ENCODE measurements at regions of chr9 and their contacts with region 1.

Region 1: GRCh38 chr9:112333639-112334431 is 416 bp upstream of the PTBP3 start:
- DNase-seq: peak; percentile 85
- ATAC-seq: peak; percentile 87
- H3K4me3 Mint-ChIP-seq: peak overlapping the region; percentile 94
- H3K27ac Mint-ChIP-seq: peak overlapping the region; percentile 96
- H3K4me1 Mint-ChIP-seq: peaks cover 40% of the 10 kb centered on the region
- H3K27me3 Mint-ChIP-seq: no peaks in the 10 kb centered on the region
- CTCF ChIP-seq: no peak

Region 2: GRCh38 chr9:111483862-111484571 is 849.8 kb before region 1 on chr9 and contains the start of gene ECPAS:
- CTCF ChIA-PET with region 1: no interaction called
- POLR2A ChIA-PET with region 1: no interaction called
- intact Hi-C with region 1: loop called (anchors 2 kb)
- DNase-seq: peak; percentile 77
- ATAC-seq: peak; percentile 66
- H3K4me3 Mint-ChIP-seq: peak within 1 kb of the TSS; percentile 88
- H3K27ac Mint-ChIP-seq: peak within 1 kb of the TSS; percentile 86
- H3K4me1 Mint-ChIP-seq: peaks cover 26% of the 10 kb centered on the region
- H3K27me3 Mint-ChIP-seq: peaks cover 4% of the 10 kb centered on the region
- CTCF ChIP-seq: no peak
- total RNA-seq, gene ECPAS: 74.2 and 81.9 TPM in 2 replicates

Region 3: DNA sequence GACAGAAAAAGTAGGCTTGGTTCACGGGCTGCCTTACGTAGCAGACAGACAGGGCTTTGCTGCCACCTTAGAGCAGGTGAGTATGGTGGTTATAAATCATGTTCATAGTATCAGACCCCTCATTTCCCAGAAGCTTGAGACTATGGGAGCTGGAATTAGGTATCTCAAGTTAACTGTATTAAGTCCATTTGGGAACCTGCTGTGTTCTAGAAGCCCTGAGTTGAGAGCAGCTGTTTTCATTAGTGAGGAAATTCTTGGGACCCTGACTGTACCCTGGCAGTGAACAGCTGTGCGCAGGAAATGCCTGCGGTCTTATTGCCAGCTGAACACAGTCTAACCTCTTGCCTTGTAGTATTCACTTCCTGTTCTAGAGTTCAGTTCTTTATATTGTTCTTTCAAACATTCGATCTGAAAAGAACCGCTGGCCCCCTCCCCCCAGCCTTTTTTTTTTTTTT is 407.4 kb before region 1 on chr9:
- CTCF ChIA-PET with region 1: no interaction called
- POLR2A ChIA-PET with region 1: no interaction called
- intact Hi-C with region 1: loop called (anchors 10 kb)
- DNase-seq: peak; percentile 34
- ATAC-seq: peak; percentile 97
- H3K4me3 Mint-ChIP-seq: peak overlapping the region; percentile 56
- H3K27ac Mint-ChIP-seq: peak overlapping the region; percentile 83
- H3K4me1 Mint-ChIP-seq: peaks cover 48% of the 10 kb centered on the region
- H3K27me3 Mint-ChIP-seq: no peaks in the 10 kb centered on the region
- CTCF ChIP-seq: no peak

Region 4: GRCh38 chr9:112097712-112098688 is 235.8 kb before region 1 on chr9:
- CTCF ChIA-PET with region 1: interaction called, 12 read pairs
- POLR2A ChIA-PET with region 1: interaction called, 8 read pairs
- intact Hi-C with region 1: loop called (anchors 1 kb)
- DNase-seq: no peak
- ATAC-seq: peak; percentile 95
- H3K4me3 Mint-ChIP-seq: no peak overlapping the region
- H3K27ac Mint-ChIP-seq: no peak overlapping the region
- H3K4me1 Mint-ChIP-seq: peaks cover 38% of the 10 kb centered on the region
- H3K27me3 Mint-ChIP-seq: no peaks in the 10 kb centered on the region
- CTCF ChIP-seq: peak; percentile 34

Region 5: GRCh38 chr9:112348257-112349007 is 14.6 kb after region 1 on chr9:
- CTCF ChIA-PET with region 1: no interaction called
- POLR2A ChIA-PET with region 1: interaction called, 6 read pairs
- intact Hi-C with region 1: loop called (anchors 1 kb)
- DNase-seq: peak; percentile 53
- ATAC-seq: peak; percentile 74
- H3K4me3 Mint-ChIP-seq: peak overlapping the region; percentile 83
- H3K27ac Mint-ChIP-seq: peak overlapping the region; percentile 62
- H3K4me1 Mint-ChIP-seq: peaks cover 9% of the 10 kb centered on the region
- H3K27me3 Mint-ChIP-seq: peaks cover 4% of the 10 kb centered on the region
- CTCF ChIP-seq: no peak

Region 6: GRCh38 chr9:112486221-112487007 is 152.6 kb after region 1 on chr9 and contains the start of gene KIAA1958:
- CTCF ChIA-PET with region 1: no interaction called
- POLR2A ChIA-PET with region 1: interaction called, 4 read pairs
- intact Hi-C with region 1: loop called (anchors 2 kb)
- DNase-seq: peak; percentile 75
- ATAC-seq: peak; percentile 89
- H3K4me3 Mint-ChIP-seq: peak within 1 kb of the TSS; percentile 97
- H3K27ac Mint-ChIP-seq: peak within 1 kb of the TSS; percentile 89
- H3K4me1 Mint-ChIP-seq: peaks cover 19% of the 10 kb centered on the region
- H3K27me3 Mint-ChIP-seq: no peaks in the 10 kb centered on the region
- CTCF ChIP-seq: no peak
- total RNA-seq, gene KIAA1958: 5.8 and 7.4 TPM in 2 replicates

Region 7: GRCh38 chr9:113221003-113221799 is 887.4 kb after region 1 on chr9 and contains the starts of genes FKBP15 and SLC31A1:
- CTCF ChIA-PET with region 1: no interaction called
- POLR2A ChIA-PET with region 1: no interaction called
- intact Hi-C with region 1: loop called (anchors 1 kb)
- DNase-seq: peak; percentile 94
- ATAC-seq: peak; percentile 95
- H3K4me3 Mint-ChIP-seq: peak within 1 kb of the TSS; percentile 96
- H3K27ac Mint-ChIP-seq: peak within 1 kb of the TSS; percentile 94
- H3K4me1 Mint-ChIP-seq: peaks cover 49% of the 10 kb centered on the region
- H3K27me3 Mint-ChIP-seq: no peaks in the 10 kb centered on the region
- CTCF ChIP-seq: no peak
- total RNA-seq, gene FKBP15: 48.3 and 49.1 TPM in 2 replicates
- total RNA-seq, gene SLC31A1: 5.7 and 7.3 TPM in 2 replicates